ENCODE measurements at regions of chr10 and their contacts with region 1.

Region 1: GRCh38 chr10:6180480-6181110 is 22.1 kb upstream of the PFKFB3 start:
- DNase-seq: no peak
- ATAC-seq: no peak
- H3K4me3 ChIP-seq: no peak overlapping the region
- H3K4me3 Mint-ChIP-seq: no peak overlapping the region
- H3K27ac ChIP-seq: no peak overlapping the region
- H3K27ac Mint-ChIP-seq: peak overlapping the region; percentile 27
- H3K4me1 ChIP-seq: peaks cover 42% of the 10 kb centered on the region
- H3K4me1 Mint-ChIP-seq: peaks cover 35% of the 10 kb centered on the region
- H3K27me3 ChIP-seq: no peaks in the 10 kb centered on the region
- H3K27me3 Mint-ChIP-seq: no peaks in the 10 kb centered on the region
- CTCF ChIP-seq: no peak

Region 2: GRCh38 chr10:6195846-6196245 is 15.3 kb after region 1 on chr10:
- CTCF ChIA-PET with region 1: no interaction called
- POLR2A ChIA-PET with region 1: interaction called, 3 read pairs
- intact Hi-C with region 1: loop called in 1 of 2 experiments (anchors 2 kb)
- DNase-seq: peak in 2 of 14 experiments; percentile 38 to 46
- ATAC-seq: peak; percentile 24
- H3K4me3 ChIP-seq: no peak overlapping the region
- H3K4me3 Mint-ChIP-seq: no peak overlapping the region
- H3K27ac ChIP-seq: no peak overlapping the region
- H3K27ac Mint-ChIP-seq: peak overlapping the region; percentile 39
- H3K4me1 ChIP-seq: peaks cover 19% of the 10 kb centered on the region
- H3K4me1 Mint-ChIP-seq: peaks cover 49% of the 10 kb centered on the region
- H3K27me3 ChIP-seq: no peaks in the 10 kb centered on the region
- H3K27me3 Mint-ChIP-seq: no peaks in the 10 kb centered on the region
- CTCF ChIP-seq: no peak

Region 3: DNA sequence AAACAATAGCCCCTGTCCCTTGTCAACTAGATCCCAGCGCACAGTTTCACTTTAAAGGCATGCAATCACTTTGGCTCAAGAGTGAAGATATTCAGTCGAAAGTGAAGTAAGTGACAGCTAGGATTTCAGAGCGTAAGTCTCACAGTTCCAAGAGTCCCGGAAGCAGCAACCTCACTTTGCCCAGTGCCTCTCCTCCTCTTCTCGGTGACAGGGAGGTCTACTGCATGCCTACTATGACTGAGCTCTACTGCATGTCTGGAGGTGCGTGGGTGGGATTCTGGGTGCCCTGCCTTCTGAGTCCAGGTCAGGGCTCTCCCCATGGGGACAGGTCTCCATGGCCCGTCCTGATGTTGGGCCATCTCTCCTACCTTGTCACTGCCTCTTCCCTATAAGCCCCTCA is 382.5 kb after region 1 on chr10:
- CTCF ChIA-PET with region 1: no interaction called
- POLR2A ChIA-PET with region 1: no interaction called
- intact Hi-C with region 1: no loop called
- DNase-seq: peak in 6 of 14 experiments; percentile 13 to 64 (median 50)
- ATAC-seq: peak; percentile 58
- H3K4me3 ChIP-seq: peak overlapping the region; percentile 21
- H3K4me3 Mint-ChIP-seq: peak overlapping the region; percentile 82
- H3K27ac ChIP-seq: peak overlapping the region; percentile 50 to 66
- H3K27ac Mint-ChIP-seq: peak overlapping the region; percentile 81
- H3K4me1 ChIP-seq: peaks cover 71% of the 10 kb centered on the region
- H3K4me1 Mint-ChIP-seq: peaks cover 90% of the 10 kb centered on the region
- H3K27me3 ChIP-seq: no peaks in the 10 kb centered on the region
- H3K27me3 Mint-ChIP-seq: no peaks in the 10 kb centered on the region
- CTCF ChIP-seq: no peak

Measured in CD4-positive, alpha-beta T cell (primary cell).